ENCODE measurements at regions of chr11 and their contacts with region 1.

Region 1: DNA sequence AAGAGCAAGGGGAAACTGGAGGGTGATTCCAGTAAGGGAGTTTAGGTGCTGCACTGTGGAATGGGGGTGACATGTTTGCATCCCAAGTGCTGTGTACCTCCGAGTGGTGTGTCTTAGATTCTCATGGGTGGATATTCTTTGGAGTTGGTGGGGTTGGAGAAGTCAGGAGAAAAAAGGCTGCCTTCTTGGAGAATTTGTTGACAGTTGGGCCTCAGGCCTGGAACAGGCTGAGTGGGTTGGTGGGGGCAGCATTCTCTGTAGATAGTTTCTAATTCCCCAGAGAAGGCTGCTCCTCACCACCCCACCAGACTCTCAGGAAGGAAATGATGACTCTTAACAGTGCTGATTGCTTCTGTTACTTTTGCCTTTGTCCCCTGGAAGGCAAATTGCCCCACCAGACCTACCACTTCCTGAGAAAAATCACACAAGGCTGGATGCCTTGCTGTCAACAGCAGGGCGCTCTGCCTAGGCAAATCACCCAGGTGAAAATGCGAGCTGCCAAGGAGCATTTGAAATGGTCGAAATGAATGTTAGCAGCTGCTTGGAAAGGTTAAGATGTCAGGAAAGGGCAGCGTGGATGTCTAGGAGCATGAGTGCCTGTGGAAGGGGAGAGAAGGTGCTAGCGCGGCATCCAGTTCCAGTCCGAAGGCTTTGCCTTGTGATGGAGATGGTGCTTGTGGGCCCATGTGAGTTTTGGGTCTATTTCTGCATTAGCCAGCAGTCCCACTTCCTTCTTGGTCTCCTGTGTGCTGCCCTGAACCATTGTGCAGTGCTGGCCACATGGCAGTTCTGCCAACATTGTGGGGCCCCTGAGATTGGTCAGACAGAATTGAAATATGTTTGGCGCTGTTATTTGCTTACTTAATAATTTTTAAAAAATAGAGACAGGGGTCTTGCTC is 29.7 kb upstream of the SORL1-AS1 start:
- DNase-seq: peak; percentile 81
- ATAC-seq: peak; percentile 82
- H3K4me3 Mint-ChIP-seq: peak overlapping the region; percentile 71
- H3K27ac Mint-ChIP-seq: peak overlapping the region; percentile 93
- H3K4me1 Mint-ChIP-seq: peaks cover 59% of the 10 kb centered on the region
- H3K27me3 Mint-ChIP-seq: no peaks in the 10 kb centered on the region

Region 2: DNA sequence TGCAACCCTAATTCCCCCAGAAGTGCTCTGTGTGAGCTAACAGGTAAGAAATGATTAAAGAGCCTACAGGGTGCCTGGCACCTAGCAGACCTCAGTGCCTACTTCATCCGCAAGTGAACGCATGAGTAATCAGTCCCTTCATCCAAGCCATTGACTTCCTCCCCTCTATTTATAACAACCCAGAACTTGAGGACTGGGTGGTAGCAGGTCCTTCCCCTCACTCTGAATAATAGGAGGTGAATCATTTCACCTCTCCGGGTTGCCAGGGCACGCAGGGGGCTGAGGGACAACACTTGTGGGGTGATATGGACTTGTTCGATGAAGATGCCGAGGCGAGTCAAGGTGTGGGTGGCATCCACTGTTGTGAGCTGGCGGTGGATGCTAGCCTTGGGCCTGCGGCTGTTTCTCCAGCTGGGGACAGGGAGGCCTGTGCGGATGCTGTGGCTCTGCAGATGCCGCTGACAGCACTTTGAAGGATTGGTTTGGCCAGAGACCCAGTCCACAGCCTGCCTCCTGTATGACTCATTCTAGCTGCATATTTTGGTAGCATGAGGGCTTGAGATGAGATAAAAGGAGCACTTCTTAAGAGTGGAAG is 18.0 kb before region 1 on chr11:
- CTCF ChIA-PET with region 1: interaction called, 18 read pairs
- POLR2A ChIA-PET with region 1: interaction called, 28 read pairs
- DNase-seq: peak; percentile 86
- ATAC-seq: peak; percentile 78
- H3K4me3 Mint-ChIP-seq: peak overlapping the region; percentile 67
- H3K27ac Mint-ChIP-seq: peak overlapping the region; percentile 93
- H3K4me1 Mint-ChIP-seq: peaks cover 98% of the 10 kb centered on the region
- H3K27me3 Mint-ChIP-seq: no peaks in the 10 kb centered on the region

Region 3: GRCh38 chr11:121494355-121495099 is 12.0 kb after region 1 on chr11:
- CTCF ChIA-PET with region 1: interaction called, 14 read pairs
- POLR2A ChIA-PET with region 1: interaction called, 7 read pairs
- DNase-seq: no peak
- ATAC-seq: peak; percentile 58
- H3K4me3 Mint-ChIP-seq: peak overlapping the region; percentile 12
- H3K27ac Mint-ChIP-seq: peak overlapping the region; percentile 86
- H3K4me1 Mint-ChIP-seq: peaks cover 38% of the 10 kb centered on the region
- H3K27me3 Mint-ChIP-seq: no peaks in the 10 kb centered on the region